Activated naive CD4-positive, alpha-beta T cell treated with anti-CD3 and anti-CD28 coated beads for 36 hours (primary cell): ENCODE measurements at regions of chr6 and their contacts with region 1.

Region 1: DNA sequence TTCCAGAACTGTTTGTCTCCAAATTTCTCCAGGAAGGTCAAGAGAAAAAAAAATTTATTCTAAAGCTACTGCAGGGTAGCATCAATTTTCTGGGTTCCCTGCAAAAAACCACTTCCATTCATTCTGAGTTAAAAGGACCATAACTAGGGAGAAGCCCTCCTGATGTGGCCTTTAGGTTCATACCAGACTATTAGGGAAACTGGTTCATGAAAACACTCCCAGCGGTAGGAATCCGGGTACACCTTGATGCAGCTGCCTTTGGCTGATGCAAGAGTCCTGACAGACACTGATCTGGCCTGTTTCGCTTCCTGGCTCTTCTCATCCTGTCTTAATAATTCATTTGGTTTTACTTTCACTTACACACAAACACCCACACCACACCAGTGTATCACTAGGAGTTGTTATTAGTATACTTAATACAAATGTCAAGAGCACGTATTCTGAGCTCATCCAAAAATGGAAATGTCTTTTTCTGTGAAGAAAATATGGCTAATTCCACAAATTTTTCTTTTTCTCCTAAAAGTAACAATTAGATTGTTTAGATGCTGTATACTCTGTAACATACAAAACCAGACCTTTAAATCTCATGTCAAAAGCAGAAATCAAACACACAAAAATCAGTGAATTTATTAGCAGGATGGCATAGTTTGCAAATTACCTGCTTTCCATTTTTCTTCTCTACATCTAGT is 38.4 kb upstream of the ARHGAP18 start:
- DNase-seq: peak; percentile 81
- H3K4me3 Mint-ChIP-seq: peak overlapping the region; percentile 46
- H3K27ac Mint-ChIP-seq: peak overlapping the region; percentile 93
- H3K4me1 Mint-ChIP-seq: peaks cover 68% of the 10 kb centered on the region
- H3K27me3 Mint-ChIP-seq: no peaks in the 10 kb centered on the region

Region 2: DNA sequence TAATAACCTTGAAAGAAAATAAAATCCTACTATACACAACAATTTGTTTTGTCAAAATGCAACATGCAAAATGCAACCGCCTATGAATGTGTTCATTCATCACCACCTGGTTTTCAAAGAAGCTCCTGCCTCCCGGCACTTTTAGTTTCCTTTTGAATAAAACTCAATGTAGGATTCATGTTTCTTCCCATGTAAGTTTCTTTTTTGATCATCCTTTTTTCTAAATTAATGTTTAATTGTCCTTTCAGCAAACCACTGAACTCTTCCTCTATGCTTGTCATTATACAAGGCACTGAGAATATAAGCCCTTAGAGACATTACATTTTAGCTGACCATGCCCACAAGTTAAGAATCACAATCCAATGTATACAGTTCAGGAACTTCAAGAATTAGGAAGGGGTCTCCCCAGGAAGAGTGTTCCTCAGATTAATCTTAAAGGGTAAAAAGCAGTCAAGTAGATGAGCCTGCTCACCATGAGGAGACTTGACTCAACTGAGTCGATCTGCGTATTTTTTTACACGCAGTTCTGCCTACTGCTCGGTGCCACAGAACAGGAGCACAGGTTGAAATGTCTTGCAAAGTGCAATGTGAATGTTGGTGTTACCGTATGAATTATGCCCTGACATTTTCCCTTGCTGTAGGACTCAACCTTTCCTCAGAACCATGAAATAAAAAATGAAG is 1840.3 kb before region 1 on chr6:
- CTCF ChIA-PET with region 1: no interaction called
- intact Hi-C with region 1: loop called (anchors 10 kb)
- DNase-seq: peak; percentile 60
- H3K4me3 Mint-ChIP-seq: peak overlapping the region; percentile 51
- H3K27ac Mint-ChIP-seq: peak overlapping the region; percentile 77
- H3K4me1 Mint-ChIP-seq: peaks cover 42% of the 10 kb centered on the region
- H3K27me3 Mint-ChIP-seq: no peaks in the 10 kb centered on the region

Region 3: GRCh38 chr6:129490521-129491245 is 257.7 kb before region 1 on chr6:
- CTCF ChIA-PET with region 1: interaction called, 3 read pairs
- intact Hi-C with region 1: loop called (anchors 1 kb)
- DNase-seq: peak; percentile 79
- H3K4me3 Mint-ChIP-seq: peak overlapping the region; percentile 67
- H3K27ac Mint-ChIP-seq: peak overlapping the region; percentile 100
- H3K4me1 Mint-ChIP-seq: peaks cover 70% of the 10 kb centered on the region
- H3K27me3 Mint-ChIP-seq: no peaks in the 10 kb centered on the region

Region 4: GRCh38 chr6:129683601-129684322 is 64.6 kb before region 1 on chr6:
- CTCF ChIA-PET with region 1: interaction called, 3 read pairs
- intact Hi-C with region 1: loop called (anchors 1 kb)
- DNase-seq: peak; percentile 79
- H3K4me3 Mint-ChIP-seq: peak overlapping the region; percentile 2
- H3K27ac Mint-ChIP-seq: peak overlapping the region; percentile 68
- H3K4me1 Mint-ChIP-seq: peaks cover 45% of the 10 kb centered on the region
- H3K27me3 Mint-ChIP-seq: no peaks in the 10 kb centered on the region

Region 5: DNA sequence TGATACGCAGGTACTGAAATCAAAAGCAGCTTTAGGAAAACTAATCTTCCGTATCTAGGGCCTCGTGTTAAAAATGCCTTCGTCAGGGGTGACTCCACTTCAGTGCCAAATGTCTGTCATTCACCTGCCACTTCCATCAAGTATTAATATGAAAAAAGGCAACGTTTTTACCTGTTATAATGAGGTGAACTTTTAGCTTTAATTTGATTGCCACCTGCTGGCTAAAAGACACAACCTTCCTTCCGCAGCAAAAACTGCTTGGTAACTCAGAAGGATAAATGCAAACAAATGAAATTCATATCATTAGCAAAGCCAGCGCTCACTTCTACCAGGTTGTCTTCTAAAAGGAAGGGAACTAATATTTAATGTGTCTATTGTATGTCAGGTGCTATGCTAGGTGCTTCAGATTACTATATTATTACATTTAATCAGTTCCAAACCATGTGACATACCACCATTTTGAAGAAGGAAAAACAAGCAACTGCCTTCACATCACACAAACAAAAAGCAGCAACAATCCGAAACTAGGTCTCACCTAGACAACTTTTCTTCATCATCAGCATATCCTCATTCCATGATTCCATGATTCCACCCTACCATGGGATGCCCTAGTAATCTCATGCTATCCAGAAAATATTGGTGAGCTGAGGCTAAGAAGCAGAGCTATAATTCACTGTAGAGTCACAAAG is 17.7 kb before region 1 on chr6:
- CTCF ChIA-PET with region 1: interaction called, 6 read pairs
- intact Hi-C with region 1: loop called (anchors 1 kb)
- DNase-seq: peak; percentile 47
- H3K4me3 Mint-ChIP-seq: no peak overlapping the region
- H3K27ac Mint-ChIP-seq: no peak overlapping the region
- H3K4me1 Mint-ChIP-seq: peaks cover 10% of the 10 kb centered on the region
- H3K27me3 Mint-ChIP-seq: no peaks in the 10 kb centered on the region

Region 6: GRCh38 chr6:129766959-129767728 is 18.8 kb after region 1 on chr6:
- CTCF ChIA-PET with region 1: interaction called, 4 read pairs
- intact Hi-C with region 1: loop called (anchors 1 kb)
- DNase-seq: peak; percentile 83
- H3K4me3 Mint-ChIP-seq: peak overlapping the region; percentile 74
- H3K27ac Mint-ChIP-seq: peak overlapping the region; percentile 19
- H3K4me1 Mint-ChIP-seq: peaks cover 15% of the 10 kb centered on the region
- H3K27me3 Mint-ChIP-seq: peaks cover 13% of the 10 kb centered on the region

Region 7: DNA sequence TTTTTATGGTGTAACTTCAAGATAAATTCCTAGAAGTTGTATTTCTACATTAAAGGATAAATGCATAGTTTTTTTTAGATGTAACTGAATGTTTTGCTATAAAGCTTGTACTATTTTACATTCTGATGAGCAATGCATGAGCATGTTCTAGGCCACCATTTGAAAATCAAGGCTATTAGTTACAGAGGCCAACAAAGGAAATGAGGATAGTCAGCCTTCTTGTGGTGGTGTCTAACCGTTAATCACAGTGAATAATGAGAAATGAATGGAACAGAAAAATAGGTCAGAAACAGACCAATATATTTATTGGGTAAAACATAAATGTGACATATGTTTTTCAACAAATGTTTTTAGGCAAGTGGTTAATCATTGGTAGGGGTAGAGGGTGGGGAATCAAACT is 232.5 kb after region 1 on chr6:
- CTCF ChIA-PET with region 1: no interaction called
- intact Hi-C with region 1: no loop called
- DNase-seq: no peak
- H3K4me3 Mint-ChIP-seq: no peak overlapping the region
- H3K27ac Mint-ChIP-seq: no peak overlapping the region
- H3K4me1 Mint-ChIP-seq: no peaks in the 10 kb centered on the region
- H3K27me3 Mint-ChIP-seq: no peaks in the 10 kb centered on the region

Region 8: DNA sequence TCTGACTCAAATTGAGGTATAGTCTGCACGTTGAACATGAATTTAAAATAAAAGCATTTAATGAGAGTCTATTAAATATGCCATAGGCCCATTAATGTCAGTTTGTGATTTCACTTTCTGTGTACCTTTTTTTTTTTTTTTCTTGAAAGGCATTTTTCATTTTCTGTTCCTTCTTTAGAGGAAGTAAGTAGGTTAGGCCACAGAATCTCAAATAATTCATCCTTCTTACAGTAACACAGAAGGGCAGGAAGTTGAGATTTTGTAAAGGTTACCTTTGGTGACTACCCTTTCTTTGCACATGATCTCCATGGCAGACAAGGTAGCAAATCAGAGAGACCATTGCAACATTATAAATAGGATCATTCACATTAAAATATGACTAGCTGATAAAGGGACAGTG is 279.6 kb after region 1 on chr6:
- CTCF ChIA-PET with region 1: no interaction called
- intact Hi-C with region 1: loop called (anchors 1 kb)
- DNase-seq: no peak
- H3K4me3 Mint-ChIP-seq: no peak overlapping the region
- H3K27ac Mint-ChIP-seq: peak overlapping the region; percentile 14
- H3K4me1 Mint-ChIP-seq: peaks cover 49% of the 10 kb centered on the region
- H3K27me3 Mint-ChIP-seq: no peaks in the 10 kb centered on the region

Region 9: DNA sequence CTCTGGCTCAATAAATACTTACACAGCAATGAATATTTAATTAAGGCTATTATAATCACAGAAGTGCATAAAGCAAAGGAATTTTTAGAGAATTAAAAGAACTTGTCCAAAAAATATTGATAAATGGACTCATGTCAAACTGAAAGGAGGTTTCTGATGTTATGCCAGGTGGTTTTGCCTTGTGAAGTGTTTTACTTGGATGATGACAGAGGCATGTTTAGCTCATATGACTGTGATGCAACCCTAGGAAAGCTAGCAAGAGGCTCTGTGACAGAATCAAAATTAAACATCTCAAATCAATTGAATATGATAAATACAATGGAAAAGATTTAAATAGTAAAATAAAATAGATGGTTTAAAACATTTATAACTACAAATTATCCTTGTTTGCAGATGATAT is 754.8 kb after region 1 on chr6:
- CTCF ChIA-PET with region 1: no interaction called
- intact Hi-C with region 1: no loop called
- DNase-seq: no peak
- H3K4me3 Mint-ChIP-seq: no peak overlapping the region
- H3K27ac Mint-ChIP-seq: no peak overlapping the region
- H3K4me1 Mint-ChIP-seq: peaks cover 28% of the 10 kb centered on the region
- H3K27me3 Mint-ChIP-seq: no peaks in the 10 kb centered on the region

Region 10: GRCh38 chr6:131029626-131030297 is 1281.4 kb after region 1 on chr6:
- CTCF ChIA-PET with region 1: no interaction called
- intact Hi-C with region 1: no loop called
- DNase-seq: no peak
- H3K4me3 Mint-ChIP-seq: no peak overlapping the region
- H3K27ac Mint-ChIP-seq: no peak overlapping the region
- H3K4me1 Mint-ChIP-seq: peaks cover 3% of the 10 kb centered on the region
- H3K27me3 Mint-ChIP-seq: no peaks in the 10 kb centered on the region